CD4-positive, alpha-beta T cell (primary cell): ENCODE measurements at regions of chr5 and their contacts with region 1.

Region 1: DNA sequence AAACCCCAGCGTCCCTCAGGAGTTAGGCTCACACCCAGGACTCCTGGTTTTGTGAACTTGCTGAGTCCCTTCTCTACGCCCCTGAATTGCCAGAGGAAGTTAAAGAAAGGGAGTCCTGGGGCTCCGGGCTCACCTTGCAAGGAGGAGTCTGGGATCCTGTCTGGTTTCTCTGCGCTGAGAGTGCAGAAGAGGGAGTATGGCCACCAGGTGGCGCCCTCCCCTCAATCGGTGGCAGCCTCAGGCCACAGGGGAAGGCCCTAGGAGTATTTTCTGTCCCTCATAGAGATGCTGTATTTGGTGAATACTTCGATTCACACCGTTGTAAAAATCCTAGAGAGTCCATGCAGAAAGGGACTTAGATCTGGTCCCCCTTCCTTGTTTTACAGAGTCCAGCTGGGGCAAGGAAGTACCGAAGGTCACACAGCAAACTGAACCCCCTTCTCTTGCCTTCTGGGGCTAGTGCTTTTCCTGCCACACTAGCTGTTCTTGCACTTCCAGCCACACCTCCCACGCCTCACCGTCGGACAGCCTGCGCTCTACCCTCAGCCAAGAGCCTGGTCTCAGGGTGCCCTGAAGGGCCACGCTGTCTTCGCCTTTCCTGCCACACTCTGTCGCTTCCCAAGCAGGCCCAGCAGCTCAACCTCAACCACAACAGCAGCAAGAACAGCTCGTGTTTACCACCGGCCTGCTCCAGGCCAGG is 10.2 kb downstream of the HAND1 start:
- DNase-seq: peak; percentile 48 to 82 (median 66)
- ATAC-seq: peak; percentile 92
- H3K4me3 ChIP-seq: no peak overlapping the region
- H3K4me3 Mint-ChIP-seq: no peak overlapping the region
- H3K27ac ChIP-seq: no peak overlapping the region
- H3K27ac Mint-ChIP-seq: no peak overlapping the region
- H3K4me1 ChIP-seq: peaks cover 12% of the 10 kb centered on the region
- H3K4me1 Mint-ChIP-seq: peaks cover 8% of the 10 kb centered on the region
- H3K27me3 ChIP-seq: peaks cover 26 to 32% of the 10 kb centered on the region in 2 experiments
- H3K27me3 Mint-ChIP-seq: peaks cover 47% of the 10 kb centered on the region
- CTCF ChIP-seq: peak; percentile 85

Region 2: DNA sequence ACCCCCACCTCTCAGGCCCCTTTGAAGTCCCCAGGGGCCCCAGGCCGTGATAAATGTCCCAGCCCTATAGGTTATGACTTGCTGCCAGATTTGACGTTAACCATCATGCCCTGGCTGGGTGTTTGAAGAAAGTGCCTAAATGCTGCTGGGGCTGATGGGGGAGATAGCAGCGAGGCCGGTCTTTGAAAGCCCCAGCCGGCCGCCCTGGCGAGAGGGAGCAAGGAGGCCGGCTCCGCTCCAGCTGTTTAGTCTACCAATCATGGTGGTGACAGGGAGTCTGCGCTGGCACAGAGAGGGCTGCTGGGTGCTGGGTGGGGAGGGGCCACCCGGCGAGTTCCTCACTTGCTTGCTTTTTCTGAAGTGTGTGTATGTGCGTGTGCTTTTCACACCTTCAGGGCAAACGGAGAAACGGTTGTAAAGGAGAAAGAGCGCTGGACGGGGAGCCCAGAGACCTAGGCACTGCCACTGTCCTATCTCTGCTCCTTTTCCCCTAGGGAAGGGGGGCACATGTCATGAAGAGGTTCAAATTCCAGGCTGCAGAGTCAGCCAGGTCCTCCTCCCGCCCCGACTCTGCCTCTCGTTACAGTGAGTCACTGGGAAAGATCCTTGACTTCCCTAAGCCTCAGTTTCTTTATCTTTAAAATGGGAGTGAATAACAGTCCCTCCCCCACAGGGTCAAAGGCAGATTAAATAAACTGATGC is 136.3 kb after region 1 on chr5:
- CTCF ChIA-PET with region 1: no interaction called
- POLR2A ChIA-PET with region 1: no interaction called
- intact Hi-C with region 1: loop called in 1 of 2 experiments (anchors 10 kb)
- DNase-seq: no peak
- ATAC-seq: no peak
- H3K4me3 ChIP-seq: no peak overlapping the region
- H3K4me3 Mint-ChIP-seq: no peak overlapping the region
- H3K27ac ChIP-seq: no peak overlapping the region
- H3K27ac Mint-ChIP-seq: no peak overlapping the region
- H3K4me1 ChIP-seq: no peaks in the 10 kb centered on the region
- H3K4me1 Mint-ChIP-seq: no peaks in the 10 kb centered on the region
- H3K27me3 ChIP-seq: peaks cover 24 to 50% of the 10 kb centered on the region in 2 experiments
- H3K27me3 Mint-ChIP-seq: peaks cover 76% of the 10 kb centered on the region
- CTCF ChIP-seq: no peak

Region 3: GRCh38 chr5:154610321-154611154 is 142.7 kb after region 1 on chr5:
- CTCF ChIA-PET with region 1: no interaction called
- POLR2A ChIA-PET with region 1: no interaction called
- intact Hi-C with region 1: loop called (anchors 1 to 10 kb)
- DNase-seq: peak in 13 of 14 experiments; percentile 11 to 65 (median 26)
- ATAC-seq: peak; percentile 60
- H3K4me3 ChIP-seq: peak overlapping the region; percentile 22
- H3K4me3 Mint-ChIP-seq: peak overlapping the region; percentile 51
- H3K27ac ChIP-seq: no peak overlapping the region
- H3K27ac Mint-ChIP-seq: no peak overlapping the region
- H3K4me1 ChIP-seq: peaks cover 13% of the 10 kb centered on the region
- H3K4me1 Mint-ChIP-seq: peaks cover 10% of the 10 kb centered on the region
- H3K27me3 ChIP-seq: peaks cover 32 to 58% of the 10 kb centered on the region in 2 experiments
- H3K27me3 Mint-ChIP-seq: peaks cover 77% of the 10 kb centered on the region
- CTCF ChIP-seq: no peak

Region 4: GRCh38 chr5:155147222-155147621 is 679.4 kb after region 1 on chr5:
- CTCF ChIA-PET with region 1: no interaction called
- POLR2A ChIA-PET with region 1: no interaction called
- intact Hi-C with region 1: loop called in 1 of 2 experiments (anchors 10 kb)
- DNase-seq: no peak
- ATAC-seq: no peak
- H3K4me3 ChIP-seq: no peak overlapping the region
- H3K4me3 Mint-ChIP-seq: no peak overlapping the region
- H3K27ac ChIP-seq: no peak overlapping the region
- H3K27ac Mint-ChIP-seq: no peak overlapping the region
- H3K4me1 ChIP-seq: no peaks in the 10 kb centered on the region
- H3K4me1 Mint-ChIP-seq: no peaks in the 10 kb centered on the region
- H3K27me3 ChIP-seq: peaks cover 0 to 3% of the 10 kb centered on the region in 2 experiments
- H3K27me3 Mint-ChIP-seq: peaks cover 10% of the 10 kb centered on the region
- CTCF ChIP-seq: peak; percentile 14